ENCODE measurements at regions of chr1 and their contacts with region 1.

Region 1: GRCh38 chr1:168553680-168554553 is 10.1 kb upstream of the XCL2 start:
- DNase-seq: no peak
- ATAC-seq: peak; percentile 70
- H3K4me3 ChIP-seq: no peak overlapping the region
- H3K27ac ChIP-seq: no peak overlapping the region
- H3K4me1 ChIP-seq: no peaks in the 10 kb centered on the region; the same call in 1 of the 2 replicates
- H3K27me3 ChIP-seq: no peaks in the 10 kb centered on the region
- CTCF ChIP-seq: no peak
- EP300 ChIP-seq: peak in 1 of 2 experiments; percentile 13; a peak in 2 of 4 replicates
- POLR2A ChIP-seq: no peak
- RAD21 ChIP-seq: no peak

Region 2: DNA sequence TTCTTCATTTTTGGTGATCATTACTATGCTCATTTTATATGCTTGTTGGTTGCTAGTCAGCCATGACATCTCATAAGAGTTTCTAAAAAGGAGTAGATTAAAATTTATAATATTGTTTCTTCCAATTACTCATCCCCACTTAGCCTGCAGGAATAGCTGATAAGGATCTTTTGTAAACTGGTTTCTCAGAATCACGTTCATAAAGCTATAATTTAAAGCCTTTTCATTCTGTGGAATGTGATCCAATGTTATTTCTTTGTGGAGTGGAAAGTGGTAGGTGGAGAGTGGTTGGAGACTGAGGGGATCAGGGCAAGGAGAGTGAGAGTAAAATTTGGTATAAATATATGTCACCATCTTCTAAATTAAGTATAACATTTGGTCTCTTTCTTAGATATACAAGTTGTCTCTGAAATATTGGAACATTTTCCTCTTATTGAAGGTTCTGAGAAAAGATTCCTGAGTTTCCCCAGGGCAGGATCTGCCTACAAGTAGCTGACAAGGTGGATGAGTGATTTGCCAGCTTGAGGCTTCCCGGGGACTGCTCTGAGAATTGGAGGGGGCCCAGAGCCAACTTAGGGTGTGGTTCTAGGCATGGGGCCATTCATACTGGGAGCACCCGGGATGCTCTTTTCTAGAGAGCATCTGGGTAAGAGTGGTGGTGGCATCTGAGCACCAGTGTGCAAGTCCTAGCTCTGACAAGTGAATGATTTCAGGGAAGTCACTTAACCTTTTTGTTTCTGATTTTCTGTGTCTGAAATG is 156.8 kb before region 1 on chr1:
- CTCF ChIA-PET with region 1: no interaction called
- POLR2A ChIA-PET with region 1: no interaction called
- RAD21 ChIA-PET with region 1: no interaction called
- SMC1A ChIA-PET with region 1: no interaction called
- in situ Hi-C with region 1: no loop called
- intact Hi-C with region 1: no loop called
- DNase-seq: no peak
- ATAC-seq: no peak
- H3K4me3 ChIP-seq: no peak overlapping the region
- H3K27ac ChIP-seq: no peak overlapping the region
- H3K4me1 ChIP-seq: no peaks in the 10 kb centered on the region
- H3K27me3 ChIP-seq: no peaks in the 10 kb centered on the region; a peak in 1 of 4 replicates
- CTCF ChIP-seq: no peak
- EP300 ChIP-seq: no peak
- POLR2A ChIP-seq: no peak
- RAD21 ChIP-seq: no peak

Region 3: GRCh38 chr1:168504064-168504837 is 49.7 kb before region 1 on chr1:
- CTCF ChIA-PET with region 1: interaction called, 10 read pairs
- POLR2A ChIA-PET with region 1: interaction called, 56 read pairs
- RAD21 ChIA-PET with region 1: interaction called, 218 read pairs
- SMC1A ChIA-PET with region 1: interaction called, 257 read pairs
- in situ Hi-C with region 1: no loop called
- intact Hi-C with region 1: no loop called
- DNase-seq: peak; percentile 60
- ATAC-seq: peak; percentile 87
- H3K4me3 ChIP-seq: no peak overlapping the region
- H3K27ac ChIP-seq: no peak overlapping the region
- H3K4me1 ChIP-seq: peaks cover 1% of the 10 kb centered on the region
- H3K27me3 ChIP-seq: no peaks in the 10 kb centered on the region
- CTCF ChIP-seq: no peak
- EP300 ChIP-seq: peak in 1 of 2 experiments; percentile 47; a peak in 1 of 4 replicates
- POLR2A ChIP-seq: no peak
- RAD21 ChIP-seq: no peak

Region 4: GRCh38 chr1:168509875-168510791 is 43.8 kb before region 1 on chr1:
- CTCF ChIA-PET with region 1: interaction called, 15 read pairs
- POLR2A ChIA-PET with region 1: interaction called, 56 read pairs
- RAD21 ChIA-PET with region 1: interaction called, 218 read pairs
- SMC1A ChIA-PET with region 1: interaction called, 257 read pairs
- in situ Hi-C with region 1: no loop called
- intact Hi-C with region 1: loop called (anchors 2 kb)
- DNase-seq: peak; percentile 88
- ATAC-seq: peak; percentile 90
- H3K4me3 ChIP-seq: no peak overlapping the region
- H3K27ac ChIP-seq: peak overlapping the region; percentile 61
- H3K4me1 ChIP-seq: peaks cover 16% of the 10 kb centered on the region
- H3K27me3 ChIP-seq: no peaks in the 10 kb centered on the region
- CTCF ChIP-seq: no peak
- EP300 ChIP-seq: peak; percentile 12 to 64; a peak in 3 of 4 replicates
- POLR2A ChIP-seq: no peak
- RAD21 ChIP-seq: no peak; the same call in 1 of the 2 replicates

Region 5: DNA sequence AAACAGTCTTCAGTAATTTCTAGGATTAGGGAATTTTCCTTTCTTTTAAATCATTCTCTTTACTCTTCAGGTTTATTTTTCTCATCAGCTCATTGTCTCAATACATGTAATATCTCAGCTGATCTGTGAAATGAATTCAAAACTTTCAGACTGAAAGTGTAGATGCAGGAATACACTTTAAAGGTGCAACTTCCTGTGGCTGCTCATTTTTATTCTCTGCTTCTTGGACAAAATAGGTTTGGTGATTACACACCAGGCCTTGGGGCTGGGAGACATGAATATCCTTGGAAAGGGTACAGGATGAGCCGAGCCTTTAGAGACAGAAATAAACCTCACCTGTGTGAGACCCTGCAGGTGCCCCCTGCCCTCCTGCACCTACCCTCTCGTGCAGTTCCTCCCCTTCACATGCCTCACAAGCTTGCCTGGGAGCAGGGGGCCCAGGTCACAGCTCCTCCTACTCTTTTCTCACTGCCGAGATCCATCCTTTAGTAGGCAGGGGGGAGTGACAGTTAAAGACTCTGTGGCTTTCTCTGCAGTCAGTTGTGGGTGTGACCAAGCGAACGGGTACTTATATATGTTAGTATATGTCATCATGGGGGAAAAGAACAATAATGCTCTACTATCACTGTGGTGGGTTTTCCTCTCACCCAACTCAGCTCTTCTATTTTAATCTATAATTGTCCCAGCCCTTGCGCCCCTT is 33.7 kb before region 1 on chr1:
- CTCF ChIA-PET with region 1: interaction called, 22 read pairs
- POLR2A ChIA-PET with region 1: interaction called, 41 read pairs
- RAD21 ChIA-PET with region 1: interaction called, 218 read pairs
- SMC1A ChIA-PET with region 1: interaction called, 257 read pairs
- in situ Hi-C with region 1: no loop called
- intact Hi-C with region 1: no loop called
- DNase-seq: no peak
- ATAC-seq: peak; percentile 95
- H3K4me3 ChIP-seq: no peak overlapping the region
- H3K27ac ChIP-seq: no peak overlapping the region
- H3K4me1 ChIP-seq: peaks cover 10% of the 10 kb centered on the region
- H3K27me3 ChIP-seq: no peaks in the 10 kb centered on the region; a peak in 1 of 4 replicates
- CTCF ChIP-seq: no peak
- EP300 ChIP-seq: peak; percentile 46 to 74; a peak in 2 of 4 replicates
- POLR2A ChIP-seq: no peak
- RAD21 ChIP-seq: no peak

Region 6: GRCh38 chr1:168535536-168535935 is 18.4 kb before region 1 on chr1:
- CTCF ChIA-PET with region 1: interaction called, 10 read pairs
- POLR2A ChIA-PET with region 1: interaction called, 29 read pairs
- RAD21 ChIA-PET with region 1: interaction called, 61 read pairs
- SMC1A ChIA-PET with region 1: interaction called, 74 read pairs
- in situ Hi-C with region 1: no loop called
- intact Hi-C with region 1: no loop called
- DNase-seq: no peak
- ATAC-seq: peak; percentile 94
- H3K4me3 ChIP-seq: no peak overlapping the region
- H3K27ac ChIP-seq: no peak overlapping the region
- H3K4me1 ChIP-seq: no peaks in the 10 kb centered on the region
- H3K27me3 ChIP-seq: no peaks in the 10 kb centered on the region
- CTCF ChIP-seq: no peak
- EP300 ChIP-seq: no peak
- POLR2A ChIP-seq: no peak
- RAD21 ChIP-seq: no peak

Region 7: GRCh38 chr1:168567007-168567406 is 13.1 kb after region 1 on chr1:
- CTCF ChIA-PET with region 1: interaction called, 9 read pairs
- POLR2A ChIA-PET with region 1: interaction called, 3 read pairs
- RAD21 ChIA-PET with region 1: interaction called, 15 read pairs
- SMC1A ChIA-PET with region 1: interaction called, 46 read pairs
- in situ Hi-C with region 1: no loop called
- intact Hi-C with region 1: no loop called
- DNase-seq: no peak
- ATAC-seq: peak; percentile 59
- H3K4me3 ChIP-seq: no peak overlapping the region
- H3K27ac ChIP-seq: no peak overlapping the region
- H3K4me1 ChIP-seq: no peaks in the 10 kb centered on the region
- H3K27me3 ChIP-seq: peaks cover 0 to 2% of the 10 kb centered on the region in 2 experiments; a peak in 1 of 4 replicates
- CTCF ChIP-seq: no peak
- EP300 ChIP-seq: no peak
- POLR2A ChIP-seq: no peak
- RAD21 ChIP-seq: no peak

Region 8: DNA sequence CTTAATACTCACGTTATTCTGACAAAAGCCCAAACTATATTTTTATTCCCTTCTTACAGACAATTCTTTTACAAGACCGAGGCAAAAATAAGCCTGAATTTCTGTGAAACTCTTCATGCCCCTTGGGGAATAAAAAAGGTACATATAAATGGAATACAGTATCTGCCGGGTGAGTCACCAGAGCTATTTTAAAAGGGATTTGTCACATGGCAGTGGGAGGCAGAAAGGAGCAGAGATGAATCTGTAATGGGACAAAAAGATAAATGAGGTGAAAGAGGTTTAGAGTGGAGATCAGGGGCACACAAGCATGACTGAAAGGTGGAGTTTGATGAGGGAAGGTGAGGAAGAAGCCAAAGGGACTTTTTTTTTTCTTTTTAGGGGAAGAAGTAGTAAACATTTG is 31.3 kb after region 1 on chr1:
- CTCF ChIA-PET with region 1: interaction called, 6 read pairs
- POLR2A ChIA-PET with region 1: interaction called, 3 read pairs
- RAD21 ChIA-PET with region 1: interaction called, 10 read pairs
- SMC1A ChIA-PET with region 1: interaction called, 16 read pairs
- in situ Hi-C with region 1: no loop called
- intact Hi-C with region 1: no loop called
- DNase-seq: no peak
- ATAC-seq: no peak
- H3K4me3 ChIP-seq: no peak overlapping the region
- H3K27ac ChIP-seq: no peak overlapping the region
- H3K4me1 ChIP-seq: no peaks in the 10 kb centered on the region
- H3K27me3 ChIP-seq: peaks cover 0 to 2% of the 10 kb centered on the region in 2 experiments; a peak in 1 of 4 replicates
- CTCF ChIP-seq: no peak
- EP300 ChIP-seq: no peak
- POLR2A ChIP-seq: no peak
- RAD21 ChIP-seq: no peak